CD4-positive, alpha-beta memory T cell (primary cell): ENCODE measurements at regions of chr1 and their contacts with region 1.

Region 1: GRCh38 chr1:54715493-54716298 is at the start of gene TTC4:
- DNase-seq: peak; percentile 70 to 89 (median 85)
- H3K4me3 ChIP-seq: peak within 1 kb of the TSS; percentile 76 to 96
- H3K4me3 Mint-ChIP-seq: peak within 1 kb of the TSS; percentile 78 to 93 (median 91)
- H3K27ac ChIP-seq: peak within 1 kb of the TSS; percentile 78
- H3K27ac Mint-ChIP-seq: peak within 1 kb of the TSS; percentile 47 to 98 (median 94)
- H3K4me1 ChIP-seq: peaks cover 17% of the 10 kb centered on the region
- H3K4me1 Mint-ChIP-seq: peaks cover 22 to 38% (median 31%) of the 10 kb centered on the region in 4 donors
- H3K27me3 ChIP-seq: no peaks in the 10 kb centered on the region
- H3K27me3 Mint-ChIP-seq: no peaks in the 10 kb centered on the region
- total RNA-seq, gene TTC4: 20.0 to 24.5 TPM

Region 2: GRCh38 chr1:54013393-54014008 is 702.2 kb before region 1 on chr1:
- CTCF ChIA-PET with region 1: no interaction called
- POLR2A ChIA-PET with region 1: no interaction called
- intact Hi-C with region 1: no loop called
- DNase-seq: no peak
- H3K4me3 ChIP-seq: no peak overlapping the region
- H3K4me3 Mint-ChIP-seq: no peak overlapping the region
- H3K27ac ChIP-seq: no peak overlapping the region
- H3K27ac Mint-ChIP-seq: no peak overlapping the region
- H3K4me1 ChIP-seq: no peaks in the 10 kb centered on the region
- H3K4me1 Mint-ChIP-seq: no peaks in the 10 kb centered on the region
- H3K27me3 ChIP-seq: no peaks in the 10 kb centered on the region
- H3K27me3 Mint-ChIP-seq: peaks cover 5 to 12% of the 10 kb centered on the region in 2 donors

Region 3: DNA sequence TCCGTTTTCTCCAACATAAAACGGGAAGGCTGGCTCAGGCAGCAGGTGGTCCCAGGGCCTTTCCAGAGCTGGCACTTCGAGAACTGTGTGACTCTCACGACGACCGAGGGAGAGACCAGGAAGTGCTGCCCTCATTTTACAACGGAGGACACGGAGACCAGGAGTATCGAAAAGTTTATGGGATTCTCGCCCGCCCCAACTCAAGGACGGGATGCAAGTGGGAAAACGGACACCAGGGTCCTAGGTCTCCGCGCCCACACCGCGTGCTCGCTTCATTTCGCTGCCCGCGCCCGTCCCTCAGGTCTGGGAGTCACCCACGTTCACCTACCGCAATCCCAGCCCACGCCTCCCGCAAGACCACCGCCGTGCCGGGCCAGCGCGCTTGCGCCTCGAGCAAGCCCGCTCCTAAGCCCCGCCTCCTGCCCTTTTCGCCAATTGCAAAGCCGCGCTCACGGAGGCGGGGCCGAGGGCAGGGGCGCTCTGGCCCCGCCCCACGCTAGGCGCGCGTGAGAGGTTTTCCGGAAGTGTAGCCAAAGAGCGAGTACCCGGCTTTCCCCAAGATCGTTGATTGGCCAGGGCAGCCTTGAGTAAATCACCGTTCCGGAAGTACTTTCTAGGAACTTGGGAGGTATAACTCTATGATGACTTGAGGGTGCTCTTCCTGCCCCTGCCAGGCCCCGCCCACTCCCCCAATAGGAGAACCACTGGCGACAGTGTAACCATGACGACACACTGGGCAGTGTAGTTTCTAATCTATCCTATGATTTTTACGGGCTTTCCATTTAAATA is 48.6 kb after region 1 on chr1 and contains the start of gene PARS2:
- CTCF ChIA-PET with region 1: interaction called, 3 read pairs
- POLR2A ChIA-PET with region 1: interaction called, 13 read pairs
- intact Hi-C with region 1: loop called (anchors 1 kb)
- DNase-seq: peak; percentile 92 to 98 (median 98)
- H3K4me3 ChIP-seq: peak within 1 kb of the TSS; percentile 92 to 100
- H3K4me3 Mint-ChIP-seq: peak within 1 kb of the TSS; percentile 92 to 98 (median 94)
- H3K27ac ChIP-seq: peak within 1 kb of the TSS; percentile 71
- H3K27ac Mint-ChIP-seq: peak within 1 kb of the TSS; percentile 84 to 97 (median 93)
- H3K4me1 ChIP-seq: peaks cover 11% of the 10 kb centered on the region
- H3K4me1 Mint-ChIP-seq: peaks cover 8 to 27% (median 19%) of the 10 kb centered on the region in 4 donors
- H3K27me3 ChIP-seq: no peaks in the 10 kb centered on the region
- H3K27me3 Mint-ChIP-seq: no peaks in the 10 kb centered on the region
- total RNA-seq, gene PARS2: 5.0 to 6.0 TPM

Region 4: DNA sequence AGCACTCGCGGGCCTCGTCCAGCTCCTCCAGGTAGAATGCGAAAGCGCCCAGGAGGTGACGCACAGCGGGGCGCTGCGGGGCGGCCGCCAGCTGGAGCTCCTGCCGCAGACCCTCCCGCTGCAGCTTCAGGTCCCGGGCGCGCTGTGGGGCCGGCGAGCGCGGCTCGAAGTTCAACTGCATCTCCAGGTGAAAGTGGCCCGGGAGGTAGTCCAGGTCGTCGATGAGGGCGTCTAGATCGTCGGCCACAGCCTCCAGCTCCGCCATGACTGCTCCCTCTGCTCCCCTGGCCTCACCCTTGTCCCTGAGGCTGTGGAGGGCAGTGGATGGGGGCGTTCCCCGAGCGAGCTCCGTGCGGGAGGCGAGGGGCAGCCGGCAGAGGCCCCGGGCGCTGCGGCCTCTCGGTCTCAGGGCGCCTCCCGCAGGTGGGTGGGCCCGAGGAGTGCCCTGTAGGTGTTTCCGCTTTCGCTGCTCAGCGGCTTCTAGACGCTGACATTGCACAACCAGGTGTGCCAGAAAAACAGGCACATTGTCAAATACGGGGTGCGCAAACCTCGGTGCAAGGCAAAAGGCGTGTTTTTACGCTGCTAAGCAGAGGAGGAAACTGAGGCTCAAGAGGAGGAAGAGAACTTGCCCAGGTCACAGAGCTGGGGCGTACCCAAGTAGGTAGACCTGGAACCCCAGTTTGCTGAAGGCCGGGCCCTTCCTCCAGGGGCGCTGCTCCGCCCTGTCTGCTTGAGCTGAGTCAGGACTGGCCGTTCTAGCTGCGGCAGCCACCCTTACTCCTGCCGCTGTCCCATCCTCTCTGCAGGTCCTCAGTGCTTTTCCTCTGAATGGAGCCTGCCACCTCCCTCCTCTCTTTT is 85.4 kb after region 1 on chr1 and contains the start of gene TTC22:
- CTCF ChIA-PET with region 1: interaction called, 3 read pairs
- POLR2A ChIA-PET with region 1: interaction called, 18 read pairs
- intact Hi-C with region 1: loop called (anchors 2 kb)
- DNase-seq: peak; percentile 65 to 77 (median 70)
- H3K4me3 ChIP-seq: peak within 1 kb of the TSS; percentile 89 to 90
- H3K4me3 Mint-ChIP-seq: peak within 1 kb of the TSS; percentile 90 to 99 (median 96)
- H3K27ac ChIP-seq: peak within 1 kb of the TSS; percentile 68
- H3K27ac Mint-ChIP-seq: peak within 1 kb of the TSS; percentile 89 to 98 (median 96)
- H3K4me1 ChIP-seq: peaks cover 46% of the 10 kb centered on the region
- H3K4me1 Mint-ChIP-seq: peaks cover 40 to 73% (median 57%) of the 10 kb centered on the region in 4 donors
- H3K27me3 ChIP-seq: no peaks in the 10 kb centered on the region
- H3K27me3 Mint-ChIP-seq: no peaks in the 10 kb centered on the region
- total RNA-seq, gene TTC22: 18.6 to 19.0 TPM